Activated CD8-positive, alpha-beta memory T cell treated with anti-CD3 and anti-CD28 coated beads, Interleukin-2, amount 10 ng/mL, durations not matched to agents 7 days and 5 days (primary cell): ENCODE measurements at regions of chr9 and their contacts with region 1.

Region 1: DNA sequence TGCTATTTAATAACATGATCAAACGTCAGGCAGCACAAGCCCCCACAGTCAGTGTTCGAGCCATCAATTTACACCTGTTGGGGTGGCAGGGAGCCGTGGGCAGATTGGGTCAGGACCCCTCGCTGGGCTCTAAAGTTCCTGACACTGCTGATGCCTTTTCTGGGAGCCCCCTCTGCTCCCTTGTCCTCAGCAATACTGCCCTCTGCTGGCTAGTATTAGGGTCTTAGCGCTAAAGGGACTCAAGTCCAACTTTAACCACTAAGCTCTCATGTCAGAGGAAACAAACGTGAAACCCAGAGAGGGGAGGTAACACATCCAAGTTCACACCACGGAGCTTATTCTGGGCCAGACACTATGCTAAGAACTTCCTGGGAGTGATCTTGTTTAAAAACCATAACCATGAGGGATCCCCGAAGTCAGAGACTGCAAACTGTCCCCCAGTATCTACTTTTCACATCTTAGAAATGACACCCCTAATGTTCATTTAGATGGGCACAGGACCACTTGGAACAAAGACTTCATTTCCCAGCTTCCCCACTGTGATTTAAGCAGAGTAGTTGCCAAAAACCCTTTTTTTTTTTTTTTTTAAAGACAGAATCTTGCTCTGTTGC is 20.4 kb downstream of the ANKS6 start:
- DNase-seq: peak; percentile 64
- ATAC-seq: peak; percentile 61
- H3K4me3 Mint-ChIP-seq: no peak overlapping the region
- H3K27ac Mint-ChIP-seq: no peak overlapping the region
- H3K4me1 Mint-ChIP-seq: peaks cover 2% of the 10 kb centered on the region
- H3K27me3 Mint-ChIP-seq: no peaks in the 10 kb centered on the region

Region 2: DNA sequence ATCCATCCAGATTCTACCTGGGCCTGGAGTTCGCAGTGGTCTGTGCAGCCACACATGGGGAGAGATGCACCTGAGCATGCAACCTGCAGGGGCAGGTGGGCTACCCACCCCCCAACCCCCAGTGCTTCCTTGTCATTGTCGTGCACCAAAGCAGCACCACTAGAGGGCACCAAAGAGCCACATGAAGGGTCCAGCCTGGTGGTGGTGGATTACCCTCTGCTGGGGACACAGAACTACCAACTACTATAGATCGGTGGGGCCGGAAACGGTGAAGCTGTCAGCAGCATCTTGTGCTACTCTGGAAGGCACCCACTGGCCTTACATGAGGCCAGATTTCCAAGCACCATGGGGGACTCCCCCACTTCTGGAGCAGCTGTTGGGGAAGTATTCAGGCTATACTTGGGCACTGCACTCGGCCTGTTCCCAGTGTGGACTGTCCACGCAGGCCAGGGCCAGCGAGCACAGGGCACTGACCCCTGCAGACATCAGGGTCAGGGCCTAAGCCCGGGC is 460.3 kb before region 1 on chr9:
- CTCF ChIA-PET with region 1: interaction called, 43 read pairs
- DNase-seq: peak; percentile 85
- ATAC-seq: peak; percentile 92
- H3K4me3 Mint-ChIP-seq: no peak overlapping the region
- H3K27ac Mint-ChIP-seq: no peak overlapping the region
- H3K4me1 Mint-ChIP-seq: no peaks in the 10 kb centered on the region
- H3K27me3 Mint-ChIP-seq: peaks cover 5% of the 10 kb centered on the region

Region 3: DNA sequence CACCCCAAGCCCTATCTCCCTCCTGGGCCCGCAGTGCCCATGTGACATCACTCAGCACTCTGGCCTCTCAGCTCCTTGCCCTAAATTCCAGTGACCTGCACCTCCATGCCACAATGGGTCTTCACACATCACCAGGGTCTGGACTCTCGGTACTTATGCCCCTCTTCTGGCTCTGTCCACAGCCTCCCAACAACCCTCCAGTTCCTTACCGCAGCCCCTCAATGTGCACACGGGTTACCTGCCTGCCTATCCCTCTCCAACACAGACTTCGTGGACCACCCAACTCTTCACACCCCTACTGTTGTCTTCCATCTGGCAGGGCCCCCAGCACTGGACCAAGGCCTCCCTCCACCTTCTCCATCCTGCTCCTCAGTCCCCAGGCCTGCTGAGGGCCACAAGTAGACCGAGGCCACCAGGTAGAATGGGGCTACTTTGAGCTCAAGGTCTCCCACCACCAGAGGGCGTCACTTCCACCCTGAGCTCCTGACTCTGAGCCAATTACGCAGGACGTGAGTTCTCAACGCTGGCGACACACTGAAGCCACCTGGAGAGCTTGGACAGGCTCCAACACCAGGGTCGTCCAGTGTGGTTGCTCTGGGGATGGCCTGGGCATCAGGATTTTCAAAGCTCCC is 239.3 kb before region 1 on chr9:
- CTCF ChIA-PET with region 1: interaction called, 20 read pairs
- DNase-seq: peak; percentile 55
- ATAC-seq: peak; percentile 39
- H3K4me3 Mint-ChIP-seq: no peak overlapping the region
- H3K27ac Mint-ChIP-seq: no peak overlapping the region
- H3K4me1 Mint-ChIP-seq: no peaks in the 10 kb centered on the region
- H3K27me3 Mint-ChIP-seq: peaks cover 20% of the 10 kb centered on the region

Region 4: GRCh38 chr9:98615633-98616032 is 160.3 kb before region 1 on chr9:
- CTCF ChIA-PET with region 1: no interaction called
- DNase-seq: no peak
- ATAC-seq: no peak
- H3K4me3 Mint-ChIP-seq: no peak overlapping the region
- H3K27ac Mint-ChIP-seq: no peak overlapping the region
- H3K4me1 Mint-ChIP-seq: peaks cover 2% of the 10 kb centered on the region
- H3K27me3 Mint-ChIP-seq: peaks cover 43% of the 10 kb centered on the region

Region 5: GRCh38 chr9:98760231-98760630 is 15.7 kb before region 1 on chr9:
- CTCF ChIA-PET with region 1: interaction called, 15 read pairs
- DNase-seq: no peak
- ATAC-seq: no peak
- H3K4me3 Mint-ChIP-seq: no peak overlapping the region
- H3K27ac Mint-ChIP-seq: no peak overlapping the region
- H3K4me1 Mint-ChIP-seq: peaks cover 4% of the 10 kb centered on the region
- H3K27me3 Mint-ChIP-seq: no peaks in the 10 kb centered on the region

Region 6: GRCh38 chr9:98791147-98792095 is 15.5 kb after region 1 on chr9:
- CTCF ChIA-PET with region 1: interaction called, 10 read pairs
- DNase-seq: peak; percentile 76
- ATAC-seq: peak; percentile 72
- H3K4me3 Mint-ChIP-seq: no peak overlapping the region
- H3K27ac Mint-ChIP-seq: no peak overlapping the region
- H3K4me1 Mint-ChIP-seq: peaks cover 16% of the 10 kb centered on the region
- H3K27me3 Mint-ChIP-seq: peaks cover 6% of the 10 kb centered on the region

Region 7: DNA sequence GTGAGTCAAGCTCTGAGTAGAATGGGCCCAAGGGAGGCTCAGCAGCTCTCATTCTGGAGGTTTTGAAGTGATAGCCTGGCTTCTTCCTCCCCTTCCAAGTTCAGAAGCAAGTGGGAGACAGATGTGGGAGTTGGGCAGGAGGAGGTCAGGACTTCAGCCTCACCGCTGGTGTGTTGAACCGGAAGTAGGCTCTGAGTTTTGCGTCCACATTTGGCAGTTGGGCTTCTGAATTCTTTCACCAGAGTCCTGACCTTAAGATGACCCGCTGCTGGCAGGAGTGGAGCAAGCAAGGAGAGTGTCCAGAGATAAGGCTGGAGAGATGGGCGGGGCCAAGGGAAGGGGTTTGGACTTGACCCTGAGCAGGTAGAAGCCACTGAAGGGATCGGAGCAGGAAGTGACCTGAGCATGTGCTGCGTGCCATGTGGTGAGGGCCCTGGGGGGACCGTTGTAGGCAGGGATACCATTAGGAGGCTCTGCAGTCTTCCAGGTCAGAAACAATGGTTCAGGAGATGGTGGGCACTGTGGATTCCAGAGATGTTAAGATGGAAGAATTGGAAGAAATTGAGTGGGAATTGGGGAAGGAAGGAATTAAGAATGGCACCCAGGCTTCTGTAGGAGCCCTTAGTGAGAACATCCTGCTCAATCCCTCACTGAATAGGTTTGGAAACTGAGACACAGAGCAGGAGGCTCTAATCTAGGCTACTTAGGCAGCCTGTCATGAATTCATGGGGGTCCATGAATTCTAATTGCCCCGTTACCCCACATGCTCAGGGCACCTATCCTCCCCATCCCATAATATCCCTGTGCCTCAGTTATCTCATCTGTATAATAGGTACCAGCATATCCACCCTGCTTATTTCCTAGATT is 57.4 kb after region 1 on chr9:
- CTCF ChIA-PET with region 1: no interaction called
- DNase-seq: no peak
- ATAC-seq: no peak
- H3K4me3 Mint-ChIP-seq: no peak overlapping the region
- H3K27ac Mint-ChIP-seq: no peak overlapping the region
- H3K4me1 Mint-ChIP-seq: no peaks in the 10 kb centered on the region
- H3K27me3 Mint-ChIP-seq: no peaks in the 10 kb centered on the region